ENCODE measurements at regions of chr10 and their contacts with region 1.

Region 1: DNA sequence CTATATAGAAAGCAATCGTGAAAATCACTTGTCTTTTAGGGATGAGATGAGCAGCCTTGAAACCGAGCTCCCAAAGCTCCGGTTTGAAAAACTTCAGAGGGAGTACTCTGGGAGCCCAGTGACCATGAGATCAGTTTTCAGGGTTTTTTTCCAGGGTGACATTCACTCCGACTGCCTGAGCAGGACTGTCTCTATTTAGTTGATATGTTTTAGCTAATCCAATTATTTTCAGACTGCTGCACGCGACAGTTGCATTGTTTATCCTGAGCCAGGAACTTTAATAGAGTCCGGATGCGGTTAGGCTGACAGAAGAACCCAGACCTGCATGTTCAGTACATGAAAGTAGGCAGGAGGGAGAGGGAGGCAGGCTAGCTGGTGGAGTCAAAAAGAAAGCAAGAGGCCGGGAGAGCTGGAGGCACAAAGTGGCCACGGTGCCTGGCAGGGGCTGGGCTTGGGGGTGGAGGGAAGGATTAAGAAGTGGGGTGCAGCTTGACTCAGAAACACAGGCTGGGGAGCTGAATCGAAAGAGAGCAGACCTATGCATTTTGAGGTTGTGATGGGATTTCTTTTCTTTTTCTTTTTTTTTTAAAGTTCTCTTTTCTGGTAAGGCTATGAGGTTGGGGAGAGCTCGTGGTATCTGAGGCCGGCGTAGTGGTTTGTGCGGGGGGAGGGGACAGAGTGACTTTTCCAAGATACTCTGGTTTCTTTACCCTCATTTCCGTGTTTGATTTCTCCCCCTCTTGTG is 5.6 kb downstream of the GATA3 start:
- DNase-seq: peak in 1 of 2 donors; percentile 85
- H3K4me3 ChIP-seq: no peak overlapping the region
- CTCF ChIP-seq: no peak
- POLR2A ChIP-seq: no peak

Region 2: GRCh38 chr10:7872041-7872442 is 188.1 kb before region 1 on chr10:
- intact Hi-C with region 1: no loop called
- DNase-seq: no peak
- H3K4me3 ChIP-seq: no peak overlapping the region
- CTCF ChIP-seq: peak in 1 of 3 donors; percentile 23
- POLR2A ChIP-seq: no peak

Region 3: DNA sequence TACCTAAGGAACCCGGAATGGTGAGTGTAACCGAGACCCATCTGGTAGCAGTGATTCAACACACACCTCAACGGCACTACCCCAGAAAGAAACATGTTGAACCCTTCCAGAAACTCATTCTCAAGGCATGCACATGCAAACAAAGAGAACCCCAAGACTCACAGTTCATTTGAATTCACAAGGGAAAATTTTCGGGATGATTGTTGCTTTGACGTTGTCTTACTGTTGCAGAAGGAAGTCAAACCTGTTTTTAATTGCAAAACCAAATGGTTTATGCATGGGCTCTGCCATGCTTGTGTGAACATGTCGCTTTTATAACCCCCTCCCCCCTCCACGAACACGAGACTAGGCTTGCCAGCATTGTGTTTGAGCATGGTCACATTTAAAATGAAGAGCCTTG is 534.1 kb after region 1 on chr10:
- intact Hi-C with region 1: loop called (anchors 5 kb)
- DNase-seq: no peak
- H3K4me3 ChIP-seq: no peak overlapping the region
- CTCF ChIP-seq: no peak
- POLR2A ChIP-seq: no peak

Measured in lower leg skin (tissue), 4 donors.